IMR-90 (cell line): ENCODE measurements at regions of chr2 and their contacts with region 1.

Region 1: GRCh38 chr2:142863485-142863961 is 13.9 kb upstream of the KYNU start:
- DNase-seq: peak; percentile 94
- ATAC-seq: peak; percentile 95
- H3K4me3 ChIP-seq: no peak overlapping the region
- H3K27ac ChIP-seq: no peak overlapping the region
- H3K4me1 ChIP-seq: peaks cover 8% of the 10 kb centered on the region
- H3K27me3 ChIP-seq: no peaks in the 10 kb centered on the region
- CTCF ChIP-seq: no peak
- POLR2A ChIP-seq: no peak
- RAD21 ChIP-seq: no peak

Region 2: DNA sequence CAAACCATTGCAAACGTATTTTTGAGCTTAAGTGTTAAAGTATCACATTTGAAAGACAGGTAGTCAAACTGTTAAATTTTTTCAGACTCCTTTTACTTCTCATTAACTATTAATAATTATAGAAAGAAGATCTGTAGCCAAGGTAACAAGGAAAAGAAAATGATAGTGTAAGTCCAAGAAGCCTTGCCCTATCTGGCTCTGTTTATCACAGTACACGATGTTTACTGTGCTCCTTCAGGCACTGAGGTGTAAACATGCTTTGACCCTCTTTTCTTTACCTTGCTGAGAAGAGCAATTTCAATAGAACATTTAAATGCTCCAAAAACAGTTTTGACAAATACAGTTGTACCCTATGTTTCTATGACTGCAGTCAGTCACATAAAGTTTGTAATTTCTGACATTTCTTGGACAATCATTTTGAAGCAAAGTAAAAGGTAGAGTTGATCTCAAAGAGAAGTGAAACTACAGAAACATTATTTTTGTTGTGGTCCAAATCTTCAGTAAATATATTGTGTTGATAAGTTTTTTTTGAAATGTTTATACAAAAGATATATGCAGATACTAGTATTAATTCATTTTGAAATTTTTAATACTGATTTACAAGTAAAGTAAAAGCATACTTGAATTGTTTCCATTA is 138.7 kb before region 1 on chr2:
- CTCF ChIA-PET with region 1: no interaction called
- POLR2A ChIA-PET with region 1: no interaction called
- dilution Hi-C with region 1: no loop called
- in situ Hi-C with region 1: no loop called
- intact Hi-C with region 1: loop called (anchors 5 kb)
- DNase-seq: no peak
- ATAC-seq: no peak
- H3K4me3 ChIP-seq: no peak overlapping the region
- H3K27ac ChIP-seq: no peak overlapping the region
- H3K4me1 ChIP-seq: peaks cover 3% of the 10 kb centered on the region
- H3K27me3 ChIP-seq: no peaks in the 10 kb centered on the region
- CTCF ChIP-seq: no peak
- POLR2A ChIP-seq: no peak
- RAD21 ChIP-seq: no peak

Region 3: DNA sequence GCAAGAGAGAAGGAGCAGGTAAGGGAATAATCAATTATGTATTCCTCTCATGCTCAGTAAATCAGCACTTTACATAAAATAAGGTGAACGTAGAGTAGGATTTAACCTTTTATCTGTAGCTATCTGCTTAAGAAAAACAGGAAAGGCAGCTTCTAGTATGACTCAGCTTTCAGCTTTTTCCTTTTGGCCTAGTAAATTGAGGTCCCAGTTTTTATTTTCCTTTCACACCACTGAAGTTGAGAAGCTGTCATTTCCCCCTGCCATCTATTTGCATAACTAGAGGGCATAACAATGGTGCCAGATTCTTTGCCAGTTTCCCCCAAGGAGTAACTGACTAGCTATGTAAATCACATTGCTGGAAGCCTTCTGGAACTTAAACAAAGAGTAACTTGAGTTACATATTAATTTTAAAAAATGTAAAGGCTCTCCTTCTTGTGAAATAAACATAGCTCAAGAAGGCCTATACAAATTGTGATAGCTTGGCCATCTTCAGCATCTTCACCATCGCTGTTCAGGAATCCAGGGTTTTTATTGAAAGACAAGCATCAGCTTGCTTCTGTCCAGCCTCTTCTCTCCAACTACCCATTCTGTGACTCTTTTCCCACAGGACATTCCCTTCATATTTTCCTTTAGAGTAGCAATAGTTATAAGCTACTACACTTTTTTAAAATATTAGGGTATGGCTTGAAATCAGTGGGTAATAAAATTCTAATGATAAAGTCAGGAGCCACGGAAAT is 110.9 kb after region 1 on chr2:
- CTCF ChIA-PET with region 1: no interaction called
- POLR2A ChIA-PET with region 1: no interaction called
- dilution Hi-C with region 1: no loop called
- in situ Hi-C with region 1: no loop called
- intact Hi-C with region 1: loop called (anchors 5 kb)
- DNase-seq: peak; percentile 55
- ATAC-seq: peak; percentile 76
- H3K4me3 ChIP-seq: no peak overlapping the region
- H3K27ac ChIP-seq: peak overlapping the region; percentile 51; the same call in 1 of the 2 replicates
- H3K4me1 ChIP-seq: peaks cover 13% of the 10 kb centered on the region
- H3K27me3 ChIP-seq: no peaks in the 10 kb centered on the region
- CTCF ChIP-seq: no peak
- POLR2A ChIP-seq: no peak
- RAD21 ChIP-seq: no peak